ENCODE measurements at regions of chr20 and their contacts with region 1.

Region 1: DNA sequence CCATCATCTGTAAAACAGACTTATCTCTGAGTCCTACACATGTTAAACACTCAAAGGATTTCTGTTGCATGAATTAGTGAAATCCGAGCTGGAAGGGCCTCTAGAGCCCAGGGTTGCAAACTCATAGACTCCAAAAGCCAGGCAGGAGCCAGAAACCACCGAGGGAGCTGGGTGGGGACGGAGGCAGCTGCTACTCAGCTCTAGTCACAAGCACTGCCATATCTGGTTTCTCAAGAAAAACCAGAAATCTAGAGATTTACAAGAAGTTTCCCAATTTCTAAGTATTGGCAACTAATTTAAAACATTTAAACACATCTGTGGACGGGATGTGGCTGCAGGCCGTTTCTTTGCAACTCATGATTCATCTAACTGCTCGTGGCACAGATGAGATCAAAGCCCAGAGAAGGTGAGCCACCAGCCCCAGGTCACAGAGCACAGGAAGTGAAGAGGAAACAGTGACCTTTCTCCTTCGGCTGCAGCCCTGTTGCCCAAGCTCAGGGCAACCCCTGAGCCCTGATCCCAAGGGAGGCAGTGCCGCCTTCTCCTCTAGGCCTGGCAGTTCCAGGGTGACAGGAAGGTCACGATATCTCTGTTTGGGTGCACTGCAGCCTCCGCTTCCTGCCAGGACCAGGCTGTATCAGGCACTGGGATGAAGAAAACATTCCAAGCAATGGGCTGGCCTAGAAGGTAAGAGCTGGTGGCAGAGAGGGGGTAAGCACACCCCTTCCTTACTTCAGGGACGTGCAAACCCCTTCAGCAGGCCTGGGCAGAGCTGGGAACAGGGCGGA is 26.4 kb upstream of the PTGIS start:
- DNase-seq: no peak
- H3K4me3 ChIP-seq: no peak overlapping the region
- H3K27ac ChIP-seq: peak overlapping the region in 1 of 2 donors; percentile 16
- H3K4me1 ChIP-seq: no peaks in the 10 kb centered on the region
- H3K27me3 ChIP-seq: no peaks in the 10 kb centered on the region
- CTCF ChIP-seq: no peak
- POLR2A ChIP-seq: no peak

Region 2: DNA sequence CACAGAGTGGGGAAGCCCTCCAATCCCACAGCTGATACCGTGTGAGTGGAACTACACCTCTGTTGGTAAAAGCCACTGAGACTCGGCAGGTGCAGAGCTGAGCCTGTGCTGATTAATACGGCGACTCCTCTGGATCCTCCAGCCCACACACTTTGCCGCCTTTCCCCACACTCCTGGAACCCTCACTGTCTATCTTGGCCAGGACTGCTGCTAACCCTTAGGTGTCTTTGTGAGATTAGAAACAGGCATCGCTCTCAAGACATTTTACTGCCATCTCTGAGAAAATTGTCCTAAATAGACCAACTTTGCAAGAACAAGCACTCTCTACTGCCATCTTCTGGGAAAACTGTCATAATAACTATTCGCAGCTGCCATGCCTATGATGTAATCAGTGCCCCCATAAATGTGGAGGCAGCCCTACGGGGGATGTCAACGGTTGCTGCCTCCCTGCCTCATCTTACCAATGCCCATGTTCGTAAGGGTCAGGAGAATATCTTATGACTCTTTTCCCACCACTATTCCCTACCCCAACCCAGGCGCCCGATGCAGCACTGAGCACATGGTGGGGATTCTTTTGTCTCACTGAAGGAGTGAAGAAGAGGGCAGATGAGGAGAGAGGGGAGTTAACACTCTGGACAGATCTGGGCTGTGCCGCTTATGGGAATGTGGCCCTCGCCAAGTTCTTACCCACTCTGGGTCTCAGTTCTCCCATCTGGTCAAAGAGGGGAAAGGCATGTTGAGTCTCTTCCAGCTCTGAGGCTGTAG is 85.7 kb before region 1 on chr20:
- intact Hi-C with region 1: no loop called
- DNase-seq: no peak
- H3K4me3 ChIP-seq: no peak overlapping the region
- H3K27ac ChIP-seq: peak overlapping the region in 1 of 2 donors; percentile 6
- H3K4me1 ChIP-seq: peaks cover 6% of the 10 kb centered on the region
- H3K27me3 ChIP-seq: no peaks in the 10 kb centered on the region
- CTCF ChIP-seq: peak in 3 of 4 experiments; percentile 50 to 59 (median 59)
- POLR2A ChIP-seq: no peak

Region 3: GRCh38 chr20:49559401-49560081 is 34.8 kb before region 1 on chr20:
- intact Hi-C with region 1: loop called (anchors 5 kb)
- DNase-seq: no peak
- H3K4me3 ChIP-seq: no peak overlapping the region
- H3K27ac ChIP-seq: peak overlapping the region in 1 of 2 donors; percentile 5
- H3K4me1 ChIP-seq: no peaks in the 10 kb centered on the region
- H3K27me3 ChIP-seq: no peaks in the 10 kb centered on the region
- CTCF ChIP-seq: no peak
- POLR2A ChIP-seq: no peak

Region 4: GRCh38 chr20:49768204-49769047 is 174.1 kb after region 1 on chr20:
- intact Hi-C with region 1: no loop called
- DNase-seq: peak; percentile 90
- H3K4me3 ChIP-seq: no peak overlapping the region
- H3K27ac ChIP-seq: peak overlapping the region; percentile 66 to 71
- H3K4me1 ChIP-seq: no peaks in the 10 kb centered on the region
- H3K27me3 ChIP-seq: no peaks in the 10 kb centered on the region
- CTCF ChIP-seq: no peak
- POLR2A ChIP-seq: no peak

Measured in prostate gland (tissue), 2 donors.